ENCODE measurements at regions of chr20 and their contacts with region 1.

Region 1: GRCh38 chr20:43068482-43068881 is 121.2 kb downstream of the PTPRT start:
- DNase-seq: no peak
- H3K4me3 ChIP-seq: no peak overlapping the region
- H3K27ac ChIP-seq: no peak overlapping the region
- H3K4me1 ChIP-seq: no peaks in the 10 kb centered on the region
- H3K27me3 ChIP-seq: no peaks in the 10 kb centered on the region
- CTCF ChIP-seq: no peak

Region 2: GRCh38 chr20:43124241-43124640 is 55.8 kb after region 1 on chr20:
- CTCF ChIA-PET with region 1: no interaction called
- dilution Hi-C with region 1: no loop called
- in situ Hi-C with region 1: loop called in 1 of 2 experiments (anchors 10 kb)
- intact Hi-C with region 1: no loop called
- DNase-seq: no peak
- H3K4me3 ChIP-seq: no peak overlapping the region
- H3K27ac ChIP-seq: no peak overlapping the region
- H3K4me1 ChIP-seq: no peaks in the 10 kb centered on the region
- H3K27me3 ChIP-seq: no peaks in the 10 kb centered on the region
- CTCF ChIP-seq: no peak

Region 3: DNA sequence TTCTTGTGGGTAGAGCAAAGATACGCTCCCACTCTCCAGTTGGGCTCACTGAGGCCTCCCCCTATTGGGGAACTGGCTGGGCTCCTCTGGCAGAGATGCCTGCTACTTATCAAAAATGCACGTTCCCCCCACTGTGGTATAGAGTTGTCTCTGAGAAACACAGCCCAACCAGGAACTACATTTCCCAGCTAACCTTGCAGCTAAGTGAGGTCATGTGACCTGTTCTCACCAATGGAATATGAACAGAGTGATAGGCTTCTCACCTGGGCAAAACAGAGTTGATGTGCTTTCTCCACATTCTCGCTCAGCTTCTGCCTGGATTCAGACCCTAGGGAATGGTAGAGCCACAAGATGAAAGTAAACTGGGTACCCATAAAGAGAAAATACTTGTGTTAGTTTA is 170.4 kb after region 1 on chr20:
- CTCF ChIA-PET with region 1: no interaction called
- dilution Hi-C with region 1: loop called (anchors 10 kb)
- in situ Hi-C with region 1: no loop called
- intact Hi-C with region 1: no loop called
- DNase-seq: no peak
- H3K4me3 ChIP-seq: no peak overlapping the region
- H3K27ac ChIP-seq: no peak overlapping the region
- H3K4me1 ChIP-seq: no peaks in the 10 kb centered on the region
- H3K27me3 ChIP-seq: no peaks in the 10 kb centered on the region
- CTCF ChIP-seq: no peak

Measured in mammary epithelial cell (primary cell).